PC-3 (cell line): ENCODE measurements at regions of chr10 and their contacts with region 1.

Region 1: GRCh38 chr10:34528320-34528719 is 286.8 kb downstream of the PARD3 start:
- DNase-seq: peak; percentile 100
- ATAC-seq: peak; percentile 75
- H3K4me3 ChIP-seq: peak overlapping the region; percentile 23
- H3K27ac ChIP-seq: peak overlapping the region; percentile 85
- H3K4me1 ChIP-seq: peaks cover 55% of the 10 kb centered on the region
- H3K27me3 ChIP-seq: no peaks in the 10 kb centered on the region
- CTCF ChIP-seq: no peak

Region 2: DNA sequence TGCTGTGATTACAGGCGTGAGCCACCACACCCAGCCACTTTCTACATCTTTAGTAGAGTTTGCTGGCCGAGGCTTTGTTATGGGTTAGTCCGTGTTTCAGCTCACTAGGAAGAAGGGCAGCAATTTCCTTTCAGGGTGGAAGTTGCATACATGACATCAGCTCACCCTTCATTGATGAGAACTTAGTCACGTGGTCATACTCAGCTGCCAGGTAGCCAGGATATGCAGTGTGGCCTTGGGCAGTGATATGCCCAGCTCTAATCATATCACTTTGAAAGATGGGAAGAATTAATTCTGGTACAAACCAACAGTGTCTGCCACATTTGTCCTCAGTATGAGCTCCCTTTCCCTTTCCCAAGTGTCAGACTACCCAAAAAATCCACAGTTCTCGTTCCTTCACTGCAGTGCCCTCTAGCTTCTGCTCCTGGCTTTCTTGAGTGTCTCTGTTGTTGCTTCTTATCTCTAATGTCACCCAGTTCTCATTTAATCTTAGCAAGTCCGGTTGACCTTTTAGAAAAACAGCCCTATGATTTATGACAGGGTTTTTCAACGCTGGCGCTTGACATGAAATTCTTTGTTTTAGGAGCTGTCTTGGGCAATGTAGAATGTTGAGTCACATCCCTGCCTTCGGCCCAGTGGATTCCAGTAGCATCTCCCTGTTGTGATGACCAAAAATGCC is 1461.6 kb before region 1 on chr10:
- CTCF ChIA-PET with region 1: no interaction called
- POLR2A ChIA-PET with region 1: interaction called, 16 read pairs
- intact Hi-C with region 1: no loop called
- DNase-seq: peak; percentile 25
- ATAC-seq: no peak; the same call in 1 of the 2 replicates
- H3K4me3 ChIP-seq: no peak overlapping the region
- H3K27ac ChIP-seq: no peak overlapping the region
- H3K4me1 ChIP-seq: no peaks in the 10 kb centered on the region
- H3K27me3 ChIP-seq: no peaks in the 10 kb centered on the region
- CTCF ChIP-seq: peak; percentile 55

Region 3: DNA sequence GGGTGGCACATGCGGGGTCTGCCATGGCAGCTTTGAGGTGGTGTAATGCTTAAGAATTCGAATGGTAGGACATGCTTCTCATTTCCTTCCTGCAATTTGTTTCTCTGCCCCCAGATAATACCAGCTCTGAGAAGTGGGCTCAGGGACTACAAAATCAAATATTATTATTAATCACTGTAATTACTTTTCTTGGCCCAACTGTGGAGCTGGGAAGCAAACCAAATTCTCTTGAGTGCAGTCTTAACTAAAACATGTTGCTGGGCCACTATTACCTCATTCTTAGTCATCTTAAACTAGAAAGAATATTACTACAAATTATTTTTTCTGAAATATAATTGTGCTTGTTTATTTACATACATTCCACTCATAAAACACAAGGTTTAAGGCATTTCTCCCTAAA is 627.2 kb before region 1 on chr10:
- CTCF ChIA-PET with region 1: no interaction called
- POLR2A ChIA-PET with region 1: no interaction called
- intact Hi-C with region 1: loop called (anchors 5 kb)
- DNase-seq: peak; percentile 98
- ATAC-seq: peak; percentile 83
- H3K4me3 ChIP-seq: no peak overlapping the region
- H3K27ac ChIP-seq: peak overlapping the region; percentile 68
- H3K4me1 ChIP-seq: peaks cover 29% of the 10 kb centered on the region
- H3K27me3 ChIP-seq: no peaks in the 10 kb centered on the region
- CTCF ChIP-seq: peak; percentile 40; the same call in 1 of the 2 replicates

Region 4: DNA sequence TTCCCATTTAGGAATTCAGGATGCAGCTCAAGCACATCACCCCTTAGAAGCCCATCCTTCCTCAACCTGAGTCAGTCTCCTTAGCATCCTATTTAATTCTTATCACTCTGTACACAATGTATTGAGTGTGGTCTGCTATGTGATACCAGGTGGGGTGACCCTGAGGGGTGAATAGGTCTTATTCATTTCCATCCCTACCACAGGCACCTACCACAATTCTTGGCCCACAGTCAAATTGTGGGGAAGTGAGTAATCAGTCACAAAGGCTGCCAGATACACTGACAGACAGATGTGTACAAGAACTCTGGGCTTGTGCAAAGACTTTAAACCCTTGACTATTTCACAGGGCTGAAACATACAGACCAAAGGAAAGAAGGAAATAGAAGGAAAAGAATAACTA is 273.7 kb before region 1 on chr10:
- CTCF ChIA-PET with region 1: no interaction called
- POLR2A ChIA-PET with region 1: no interaction called
- intact Hi-C with region 1: loop called (anchors 2 kb)
- DNase-seq: peak; percentile 100
- ATAC-seq: peak; percentile 89
- H3K4me3 ChIP-seq: no peak overlapping the region
- H3K27ac ChIP-seq: peak overlapping the region; percentile 3
- H3K4me1 ChIP-seq: peaks cover 28% of the 10 kb centered on the region
- H3K27me3 ChIP-seq: no peaks in the 10 kb centered on the region
- CTCF ChIP-seq: no peak

Region 5: GRCh38 chr10:34479520-34480179 is 48.7 kb before region 1 on chr10:
- CTCF ChIA-PET with region 1: no interaction called
- POLR2A ChIA-PET with region 1: no interaction called
- intact Hi-C with region 1: loop called (anchors 1 kb)
- DNase-seq: no peak
- ATAC-seq: no peak
- H3K4me3 ChIP-seq: no peak overlapping the region
- H3K27ac ChIP-seq: no peak overlapping the region
- H3K4me1 ChIP-seq: peaks cover 18% of the 10 kb centered on the region
- H3K27me3 ChIP-seq: no peaks in the 10 kb centered on the region
- CTCF ChIP-seq: no peak

Region 6: DNA sequence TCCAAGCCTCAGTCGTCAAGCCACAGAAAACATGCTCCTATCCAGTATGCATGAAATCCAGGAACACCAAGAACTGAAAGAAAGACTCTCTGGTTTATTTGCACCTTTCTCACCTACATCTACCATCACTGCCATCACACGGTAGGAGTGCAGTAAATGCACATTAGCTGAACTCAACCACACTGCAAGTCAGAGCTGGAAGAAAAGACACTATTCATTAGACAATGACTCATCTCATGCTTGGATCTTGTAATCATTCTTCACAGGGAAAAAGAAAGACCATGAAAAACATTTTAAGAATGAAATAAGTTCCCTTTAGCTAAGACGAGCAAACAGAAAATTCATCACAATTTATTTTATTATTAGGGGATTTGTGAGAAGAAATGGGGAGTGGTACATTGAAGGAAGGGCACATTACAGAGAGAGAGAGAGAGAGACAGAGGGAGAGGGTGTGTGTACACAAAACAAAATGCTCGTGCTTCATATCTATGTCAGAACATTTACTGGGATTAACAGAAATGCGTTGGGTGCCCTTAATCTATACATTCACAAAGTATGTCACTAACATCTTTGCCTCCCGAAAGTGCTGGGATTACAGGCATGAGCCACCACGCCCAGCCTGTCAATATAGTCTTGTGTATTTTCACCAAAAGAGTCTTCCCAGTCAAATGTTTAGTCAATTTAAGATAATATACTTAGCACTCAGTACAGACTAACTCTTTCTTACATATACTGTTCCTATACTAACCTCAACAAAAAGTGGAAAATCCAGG is 38.2 kb before region 1 on chr10:
- CTCF ChIA-PET with region 1: no interaction called
- POLR2A ChIA-PET with region 1: no interaction called
- intact Hi-C with region 1: no loop called
- DNase-seq: peak; percentile 87
- ATAC-seq: peak; percentile 85
- H3K4me3 ChIP-seq: no peak overlapping the region
- H3K27ac ChIP-seq: peak overlapping the region; percentile 14
- H3K4me1 ChIP-seq: peaks cover 27% of the 10 kb centered on the region
- H3K27me3 ChIP-seq: no peaks in the 10 kb centered on the region
- CTCF ChIP-seq: peak; percentile 41; the same call in 1 of the 2 replicates

Region 7: DNA sequence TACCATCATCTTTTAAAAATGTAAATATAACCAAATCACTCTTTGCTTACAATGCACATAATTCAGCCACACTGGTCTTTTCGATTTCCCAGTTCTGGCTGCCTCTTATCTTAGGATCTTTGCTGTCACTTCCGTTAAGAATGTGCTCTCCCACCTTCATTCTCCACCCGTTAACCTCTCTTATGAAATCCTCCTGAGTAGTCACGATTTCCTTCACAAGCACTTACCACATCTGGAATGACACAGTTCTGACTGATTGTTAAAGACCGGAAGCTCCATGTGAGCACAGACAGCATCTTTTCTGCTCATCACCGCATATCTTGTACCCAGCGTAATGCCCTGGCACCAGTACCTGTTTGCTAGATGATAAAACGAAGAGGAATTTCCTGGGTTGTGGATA is 477.5 kb after region 1 on chr10:
- CTCF ChIA-PET with region 1: no interaction called
- POLR2A ChIA-PET with region 1: no interaction called
- intact Hi-C with region 1: loop called (anchors 2 kb)
- DNase-seq: peak; percentile 100
- ATAC-seq: peak; percentile 81
- H3K4me3 ChIP-seq: no peak overlapping the region
- H3K27ac ChIP-seq: peak overlapping the region; percentile 82
- H3K4me1 ChIP-seq: peaks cover 52% of the 10 kb centered on the region
- H3K27me3 ChIP-seq: no peaks in the 10 kb centered on the region
- CTCF ChIP-seq: no peak